ENCODE measurements at regions of chr3 and their contacts with region 1.

Region 1: GRCh38 chr3:195863121-195864006 is 45.0 kb downstream of the TNK2 start:
- DNase-seq: peak; percentile 70 to 95 (median 86)
- ATAC-seq: peak; percentile 85 to 97 (median 96)
- H3K4me3 ChIP-seq: no peak overlapping the region
- H3K27ac ChIP-seq: no peak overlapping the region
- H3K4me1 ChIP-seq: peaks cover 0 to 3% (median 0%) of the 10 kb centered on the region in 3 donors
- H3K27me3 ChIP-seq: no peaks in the 10 kb centered on the region
- CTCF ChIP-seq: peak; percentile 77 to 89 (median 84)

Region 2: DNA sequence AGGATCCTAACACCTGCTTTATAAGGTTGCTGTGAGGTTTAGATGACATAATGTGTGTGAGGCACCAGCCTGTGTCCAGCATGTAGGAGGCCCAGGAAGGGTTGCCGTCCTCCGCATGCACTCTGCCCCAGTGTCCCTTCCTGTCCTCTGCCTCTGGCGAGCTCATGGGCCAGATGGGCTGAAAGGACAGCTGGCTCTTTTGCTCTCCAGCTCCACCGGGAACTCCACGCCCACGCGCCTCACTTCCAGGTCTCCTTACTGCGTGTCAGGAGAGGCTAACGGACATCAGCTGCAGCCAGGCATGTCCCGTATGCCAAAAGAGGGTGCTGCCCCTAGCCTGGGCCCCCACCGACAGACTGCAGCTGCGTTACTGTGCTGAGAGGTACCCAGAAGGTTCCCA is 130.4 kb before region 1 on chr3:
- intact Hi-C with region 1: no loop called
- DNase-seq: peak in 1 of 6 donors; percentile 62
- ATAC-seq: no peak
- H3K4me3 ChIP-seq: no peak overlapping the region
- H3K27ac ChIP-seq: no peak overlapping the region
- H3K4me1 ChIP-seq: peaks cover 0 to 2% (median 0%) of the 10 kb centered on the region in 3 donors
- H3K27me3 ChIP-seq: no peaks in the 10 kb centered on the region
- CTCF ChIP-seq: no peak

Region 3: GRCh38 chr3:195909644-195910508 is 46.5 kb after region 1 on chr3:
- intact Hi-C with region 1: loop called in 2 of 3 experiments (anchors 5 kb)
- DNase-seq: peak; percentile 84 to 94 (median 88)
- ATAC-seq: peak; percentile 75 to 85 (median 82)
- H3K4me3 ChIP-seq: peak overlapping the region; percentile 52 to 69 (median 58)
- H3K27ac ChIP-seq: peak overlapping the region in 1 of 4 donors; percentile 46
- H3K4me1 ChIP-seq: peaks cover 15 to 28% (median 16%) of the 10 kb centered on the region in 3 donors
- H3K27me3 ChIP-seq: no peaks in the 10 kb centered on the region
- CTCF ChIP-seq: no peak

Measured in pancreas (tissue), 10 donors.